ENCODE measurements at regions of chr4 and their contacts with region 1.

Region 1: GRCh38 chr4:169492438-169493163 is 119.8 kb downstream of the NEK1 start:
- DNase-seq: peak; percentile 62
- ATAC-seq: peak; percentile 58
- H3K4me3 ChIP-seq: no peak overlapping the region
- H3K27ac ChIP-seq: no peak overlapping the region
- H3K4me1 ChIP-seq: no peaks in the 10 kb centered on the region
- H3K27me3 ChIP-seq: no peaks in the 10 kb centered on the region
- CTCF ChIP-seq: peak; percentile 79

Region 2: DNA sequence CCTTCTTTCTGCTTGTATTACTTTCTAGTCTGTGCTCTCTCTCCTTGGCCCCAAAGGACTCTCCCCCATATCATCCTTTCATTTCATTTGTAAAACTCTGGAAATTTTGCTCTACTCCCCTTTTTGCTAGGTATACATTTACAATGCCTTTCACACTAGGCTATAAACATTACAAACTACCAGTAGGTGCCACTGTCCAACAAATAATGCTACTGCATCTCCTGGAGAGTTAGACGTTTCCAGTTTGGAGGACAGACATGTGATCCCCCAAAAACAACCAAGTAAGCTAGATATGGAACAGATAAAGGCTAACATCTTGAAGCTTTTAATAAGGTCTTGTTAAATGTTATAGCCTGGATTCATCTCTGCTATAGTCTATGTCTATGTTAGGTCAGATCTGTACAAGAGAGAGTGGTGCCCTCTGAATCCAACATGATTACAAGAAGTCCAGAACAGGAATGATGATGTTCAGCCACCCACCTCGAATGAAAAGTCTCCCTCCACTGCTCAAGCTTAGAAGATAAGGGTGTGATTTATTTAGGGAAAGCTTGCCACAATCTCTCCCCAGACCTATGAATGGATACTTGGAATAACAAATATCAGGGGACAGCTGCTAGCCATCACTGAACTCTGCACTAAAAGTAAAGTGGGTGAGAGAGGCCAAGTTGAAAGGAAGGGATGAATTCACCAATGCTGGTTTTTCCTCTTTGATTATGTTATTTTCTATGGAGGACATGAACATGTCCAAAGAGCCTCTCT is 496.9 kb before region 1 on chr4:
- CTCF ChIA-PET with region 1: no interaction called
- POLR2A ChIA-PET with region 1: no interaction called
- intact Hi-C with region 1: loop called (anchors 2 kb)
- DNase-seq: peak; percentile 59
- ATAC-seq: peak; percentile 73
- H3K4me3 ChIP-seq: no peak overlapping the region
- H3K27ac ChIP-seq: no peak overlapping the region
- H3K4me1 ChIP-seq: no peaks in the 10 kb centered on the region
- H3K27me3 ChIP-seq: no peaks in the 10 kb centered on the region
- CTCF ChIP-seq: peak; percentile 66

Region 3: GRCh38 chr4:170805352-170805751 is 1312.8 kb after region 1 on chr4:
- CTCF ChIA-PET with region 1: no interaction called
- POLR2A ChIA-PET with region 1: no interaction called
- intact Hi-C with region 1: no loop called
- DNase-seq: no peak
- ATAC-seq: no peak
- H3K4me3 ChIP-seq: no peak overlapping the region
- H3K27ac ChIP-seq: no peak overlapping the region
- H3K4me1 ChIP-seq: no peaks in the 10 kb centered on the region
- H3K27me3 ChIP-seq: no peaks in the 10 kb centered on the region
- CTCF ChIP-seq: no peak